ENCODE measurements at regions of chr7 and their contacts with region 1.

Region 1: GRCh38 chr7:51162724-51163329 is 153.8 kb downstream of the COBL start:
- DNase-seq: peak; percentile 89
- H3K4me3 Mint-ChIP-seq: no peak overlapping the region
- H3K27ac Mint-ChIP-seq: no peak overlapping the region
- H3K4me1 Mint-ChIP-seq: peaks cover 5% of the 10 kb centered on the region
- H3K27me3 Mint-ChIP-seq: no peaks in the 10 kb centered on the region
- CTCF ChIP-seq: peak; percentile 55

Region 2: DNA sequence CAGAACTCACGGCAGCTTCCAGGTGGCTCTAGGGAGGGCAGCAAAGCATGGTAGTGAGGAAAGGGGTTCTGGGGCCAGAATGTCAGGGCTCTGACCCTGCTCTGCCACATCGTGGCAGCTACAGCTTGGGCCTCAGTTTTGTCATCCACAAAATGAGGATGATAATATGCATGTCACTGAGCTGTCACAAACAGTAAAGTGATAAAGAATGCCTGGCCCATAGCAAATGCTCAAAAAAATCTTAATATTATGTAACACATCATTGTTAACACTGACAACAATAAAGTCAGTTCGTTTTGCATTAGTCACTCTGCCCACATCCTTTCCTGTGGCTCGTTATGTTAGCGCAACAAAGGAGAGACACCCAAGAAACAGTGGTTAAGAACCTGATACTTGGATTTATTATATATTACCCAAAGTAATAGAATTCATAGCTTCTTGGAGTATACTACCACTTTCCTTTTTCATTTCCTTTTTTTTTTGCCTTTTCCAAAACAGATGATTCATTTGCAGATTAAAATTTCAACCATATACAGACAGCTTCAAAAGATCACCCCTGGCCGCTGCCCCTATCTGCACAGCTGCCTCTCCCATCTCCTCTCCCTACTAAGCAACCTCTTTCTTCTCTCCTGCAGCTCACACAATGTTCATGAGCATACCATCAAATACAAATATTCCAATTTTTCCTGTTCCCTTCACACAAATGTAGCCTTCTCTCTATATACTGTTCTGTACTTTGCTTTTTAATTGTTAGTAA is 552.1 kb before region 1 on chr7:
- CTCF ChIA-PET with region 1: interaction called, 19 read pairs
- POLR2A ChIA-PET with region 1: no interaction called
- intact Hi-C with region 1: no loop called
- DNase-seq: peak; percentile 72
- H3K4me3 Mint-ChIP-seq: no peak overlapping the region
- H3K27ac Mint-ChIP-seq: peak overlapping the region; percentile 21
- H3K4me1 Mint-ChIP-seq: peaks cover 14% of the 10 kb centered on the region
- H3K27me3 Mint-ChIP-seq: no peaks in the 10 kb centered on the region
- CTCF ChIP-seq: no peak

Region 3: DNA sequence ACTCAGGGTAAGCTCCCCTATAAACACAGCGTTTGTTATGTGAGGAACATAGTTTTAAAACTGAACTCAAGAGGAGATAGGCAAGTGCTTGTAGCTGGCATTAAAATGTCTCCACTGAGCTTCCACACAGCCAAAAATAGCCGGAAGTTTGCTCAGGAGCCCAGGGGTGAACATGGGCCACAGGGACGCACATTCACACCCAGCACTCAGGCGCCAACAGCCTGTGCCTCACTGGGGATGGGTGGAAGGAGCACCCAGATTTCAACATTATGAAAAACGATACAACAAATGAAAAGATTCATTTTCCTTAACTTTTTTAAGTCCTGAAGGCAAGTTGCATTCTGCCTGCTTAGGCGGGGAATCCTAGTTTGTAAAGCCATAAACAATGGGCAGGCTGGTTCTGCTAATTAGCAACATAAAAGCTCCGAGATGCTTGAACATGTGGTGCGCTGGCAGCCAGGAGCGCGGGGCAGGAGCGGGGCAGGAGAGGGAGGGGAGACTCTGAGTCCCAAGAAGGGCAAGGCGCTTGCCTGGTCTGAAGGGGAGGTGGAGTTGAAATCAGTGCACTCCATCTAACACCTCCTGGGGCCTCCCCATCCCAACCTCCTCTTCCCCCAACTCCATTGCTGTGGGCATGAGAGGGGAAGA is 82.1 kb before region 1 on chr7:
- CTCF ChIA-PET with region 1: interaction called, 10 read pairs
- POLR2A ChIA-PET with region 1: no interaction called
- intact Hi-C with region 1: no loop called
- DNase-seq: no peak
- H3K4me3 Mint-ChIP-seq: no peak overlapping the region
- H3K27ac Mint-ChIP-seq: no peak overlapping the region
- H3K4me1 Mint-ChIP-seq: no peaks in the 10 kb centered on the region
- H3K27me3 Mint-ChIP-seq: no peaks in the 10 kb centered on the region
- CTCF ChIP-seq: no peak

Region 4: DNA sequence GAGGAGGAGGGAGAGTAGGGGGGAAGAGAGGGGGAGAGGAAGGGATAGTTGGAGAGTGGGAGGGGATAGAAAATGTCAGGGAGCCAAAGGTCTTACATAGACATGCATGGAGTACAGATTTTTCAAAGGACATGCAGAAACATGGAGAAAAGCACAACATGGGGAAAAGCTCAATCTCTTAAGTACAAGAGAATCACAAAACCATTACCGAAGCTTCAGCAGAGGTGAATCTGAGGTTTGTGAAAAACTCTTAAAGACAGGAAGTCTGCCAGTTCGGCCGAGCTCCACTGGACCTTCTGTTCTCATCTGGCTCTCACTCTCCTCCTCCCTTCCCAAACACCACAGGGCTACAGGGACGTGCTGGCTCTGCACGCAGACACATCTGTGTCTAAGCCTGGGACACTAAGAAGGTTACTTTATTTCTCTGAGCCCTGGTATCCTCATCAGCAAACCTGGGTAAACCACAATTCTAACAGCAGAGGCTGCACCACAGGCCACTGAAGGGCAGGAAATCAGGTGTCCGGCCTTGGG is 19.9 kb after region 1 on chr7:
- CTCF ChIA-PET with region 1: interaction called, 46 read pairs
- POLR2A ChIA-PET with region 1: no interaction called
- intact Hi-C with region 1: no loop called
- DNase-seq: no peak
- H3K4me3 Mint-ChIP-seq: no peak overlapping the region
- H3K27ac Mint-ChIP-seq: no peak overlapping the region
- H3K4me1 Mint-ChIP-seq: no peaks in the 10 kb centered on the region
- H3K27me3 Mint-ChIP-seq: no peaks in the 10 kb centered on the region
- CTCF ChIP-seq: no peak

Region 5: DNA sequence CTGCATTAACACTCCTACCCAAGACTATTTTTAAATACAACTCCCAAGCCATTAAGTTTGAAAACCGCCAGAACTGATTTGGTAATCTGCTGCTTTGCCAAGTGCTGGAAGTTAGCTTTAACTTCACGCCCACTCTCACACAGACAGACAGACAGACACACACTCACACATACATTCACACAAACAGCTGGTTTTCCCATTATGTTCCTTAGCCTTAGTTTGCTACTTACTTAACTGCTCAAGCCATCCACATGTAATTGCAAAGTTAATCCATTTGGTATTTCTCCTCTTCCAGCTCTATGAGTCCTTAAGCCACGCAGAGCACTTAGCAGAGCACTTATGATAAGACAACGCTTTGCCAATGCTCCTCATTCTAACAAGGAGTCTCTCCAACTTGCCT is 145.4 kb after region 1 on chr7:
- CTCF ChIA-PET with region 1: interaction called, 15 read pairs
- POLR2A ChIA-PET with region 1: interaction called, 3 read pairs
- intact Hi-C with region 1: no loop called
- DNase-seq: no peak
- H3K4me3 Mint-ChIP-seq: no peak overlapping the region
- H3K27ac Mint-ChIP-seq: no peak overlapping the region
- H3K4me1 Mint-ChIP-seq: peaks cover 6% of the 10 kb centered on the region
- H3K27me3 Mint-ChIP-seq: no peaks in the 10 kb centered on the region
- CTCF ChIP-seq: no peak

Region 6: GRCh38 chr7:51366930-51367613 is 204.2 kb after region 1 on chr7:
- CTCF ChIA-PET with region 1: interaction called, 400 read pairs
- POLR2A ChIA-PET with region 1: interaction called, 15 read pairs
- intact Hi-C with region 1: loop called (anchors 1 kb)
- DNase-seq: peak; percentile 62
- H3K4me3 Mint-ChIP-seq: no peak overlapping the region
- H3K27ac Mint-ChIP-seq: no peak overlapping the region
- H3K4me1 Mint-ChIP-seq: peaks cover 5% of the 10 kb centered on the region
- H3K27me3 Mint-ChIP-seq: peaks cover 11% of the 10 kb centered on the region
- CTCF ChIP-seq: peak; percentile 76